Mucosa of descending colon (tissue), 3 donors: ENCODE measurements at regions of chr12 and their contacts with region 1.

Region 1: GRCh38 chr12:49783917-49784676 is 42.7 kb downstream of the TMBIM6 start:
- DNase-seq: peak in 1 of 3 donors; percentile 16
- ATAC-seq: peak; percentile 48
- H3K4me3 ChIP-seq: no peak overlapping the region
- H3K4me1 ChIP-seq: no peaks in the 10 kb centered on the region
- CTCF ChIP-seq: no peak

Region 2: GRCh38 chr12:49462083-49462744 is 321.9 kb before region 1 on chr12:
- intact Hi-C with region 1: no loop called
- DNase-seq: no peak
- ATAC-seq: no peak
- H3K4me3 ChIP-seq: no peak overlapping the region
- H3K4me1 ChIP-seq: no peaks in the 10 kb centered on the region
- CTCF ChIP-seq: no peak

Region 3: GRCh38 chr12:49838973-49839633 is 55.0 kb after region 1 on chr12:
- intact Hi-C with region 1: loop called in 1 of 2 experiments (anchors 10 kb)
- DNase-seq: peak in 1 of 3 donors; percentile 37
- ATAC-seq: no peak
- H3K4me3 ChIP-seq: no peak overlapping the region
- H3K4me1 ChIP-seq: peaks cover 14% of the 10 kb centered on the region
- CTCF ChIP-seq: peak; percentile 42

Region 4: GRCh38 chr12:49866859-49867579 is 82.9 kb after region 1 on chr12:
- intact Hi-C with region 1: no loop called
- DNase-seq: peak; percentile 74 to 87 (median 80)
- ATAC-seq: peak; percentile 85
- H3K4me3 ChIP-seq: no peak overlapping the region
- H3K4me1 ChIP-seq: no peaks in the 10 kb centered on the region
- CTCF ChIP-seq: peak; percentile 87